ENCODE measurements at regions of chr5 and their contacts with region 1.

Region 1: DNA sequence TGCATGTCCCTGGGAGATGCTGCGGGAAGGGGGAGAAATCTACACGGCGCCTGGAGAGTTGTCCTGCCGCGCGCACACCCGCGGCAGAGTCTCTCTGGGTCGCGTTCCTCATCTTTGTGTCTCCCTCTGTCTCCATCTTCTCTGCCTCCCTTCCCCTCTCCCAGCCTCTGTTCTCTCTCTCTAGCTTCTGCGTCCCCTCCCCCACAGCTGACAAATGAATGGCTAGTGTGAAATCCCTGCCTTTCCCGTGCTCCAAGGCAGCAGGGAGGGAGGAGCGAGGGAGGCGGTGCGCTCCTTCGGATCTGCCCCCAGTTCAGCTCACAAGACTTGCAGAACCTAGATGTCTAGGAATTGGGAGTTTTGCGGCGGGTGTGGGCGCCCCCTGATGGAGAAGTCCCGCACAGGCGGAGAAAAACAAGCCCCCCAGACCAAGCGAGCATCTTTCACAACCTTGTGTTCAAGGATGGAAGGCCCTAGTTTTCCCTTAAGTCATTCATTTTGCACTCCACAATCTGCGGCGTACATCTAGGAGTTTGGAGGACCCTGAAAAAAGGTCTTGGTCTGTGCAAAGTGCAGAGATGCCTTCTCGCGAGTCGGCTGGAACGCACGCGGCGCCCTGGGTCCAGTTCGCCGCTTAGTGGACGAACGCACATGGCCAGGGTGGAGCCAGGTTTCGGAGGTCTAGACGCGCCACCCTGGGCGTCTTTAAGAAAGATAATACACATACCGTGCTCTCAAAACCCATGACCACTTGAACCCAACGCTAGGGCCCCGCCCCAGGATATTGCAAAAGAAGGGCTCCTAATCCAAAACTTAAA is 2.0 kb downstream of the VCAN start:
- DNase-seq: peak; percentile 78
- H3K4me3 Mint-ChIP-seq: peak overlapping the region; percentile 77
- H3K27ac Mint-ChIP-seq: no peak overlapping the region
- H3K4me1 Mint-ChIP-seq: peaks cover 34% of the 10 kb centered on the region
- H3K27me3 Mint-ChIP-seq: peaks cover 67% of the 10 kb centered on the region

Region 2: GRCh38 chr5:82312373-82312856 is 1161.1 kb before region 1 on chr5:
- CTCF ChIA-PET with region 1: interaction called, 3 read pairs
- POLR2A ChIA-PET with region 1: no interaction called
- intact Hi-C with region 1: loop called (anchors 1 kb)
- DNase-seq: peak; percentile 63
- H3K4me3 Mint-ChIP-seq: no peak overlapping the region
- H3K27ac Mint-ChIP-seq: no peak overlapping the region
- H3K4me1 Mint-ChIP-seq: no peaks in the 10 kb centered on the region
- H3K27me3 Mint-ChIP-seq: peaks cover 1% of the 10 kb centered on the region

Region 3: GRCh38 chr5:82641331-82642003 is 832.1 kb before region 1 on chr5:
- CTCF ChIA-PET with region 1: interaction called, 3 read pairs
- POLR2A ChIA-PET with region 1: no interaction called
- intact Hi-C with region 1: loop called (anchors 2 kb)
- DNase-seq: peak; percentile 12
- H3K4me3 Mint-ChIP-seq: no peak overlapping the region
- H3K27ac Mint-ChIP-seq: no peak overlapping the region
- H3K4me1 Mint-ChIP-seq: no peaks in the 10 kb centered on the region
- H3K27me3 Mint-ChIP-seq: no peaks in the 10 kb centered on the region

Region 4: DNA sequence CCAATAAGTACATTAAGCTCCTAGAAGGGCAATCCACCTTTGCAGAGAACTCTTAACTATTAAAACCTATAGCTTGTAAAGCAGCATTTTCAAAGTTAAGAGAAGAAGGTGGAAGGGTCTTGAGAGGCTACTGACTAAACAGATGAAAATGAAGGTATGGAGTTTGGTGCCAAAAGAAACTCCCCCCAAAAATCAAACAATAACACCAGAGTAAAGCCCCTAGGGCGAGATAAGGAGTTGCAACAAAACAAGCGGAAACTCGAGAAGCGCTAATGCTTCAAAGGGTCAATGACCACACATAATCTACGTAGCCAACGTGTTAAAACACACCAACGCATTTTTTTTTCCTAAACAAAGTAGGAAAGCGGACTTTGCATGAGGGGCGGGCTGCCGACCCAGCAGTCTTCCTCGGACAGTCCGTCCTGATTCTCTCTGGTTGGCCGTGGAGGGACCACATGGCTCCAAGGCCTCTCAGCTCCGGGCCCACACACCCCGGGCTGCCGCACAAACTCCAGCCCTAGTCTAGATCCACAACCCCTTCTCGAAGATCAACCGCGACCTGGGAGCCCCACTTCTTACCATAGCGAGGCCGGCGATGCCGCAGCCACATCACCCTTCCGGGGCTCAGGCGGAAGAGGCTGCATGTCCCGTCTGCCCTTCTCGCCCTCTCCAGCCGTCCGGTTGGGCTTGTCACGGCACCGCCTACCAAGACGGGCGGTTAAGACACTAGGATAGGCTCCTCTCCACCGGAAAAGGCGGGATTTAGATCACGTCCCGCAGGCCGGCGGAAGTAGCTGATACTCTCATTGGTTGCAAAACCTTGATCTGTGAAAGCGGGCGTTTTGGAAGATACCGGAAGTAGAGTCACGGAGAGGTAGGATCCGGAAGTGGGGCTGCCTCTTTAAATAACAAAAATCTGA is 396.6 kb before region 1 on chr5 and contains the starts of genes TMEM167A and XRCC4:
- CTCF ChIA-PET with region 1: no interaction called
- POLR2A ChIA-PET with region 1: no interaction called
- intact Hi-C with region 1: loop called (anchors 5 kb)
- DNase-seq: peak; percentile 96
- H3K4me3 Mint-ChIP-seq: peak within 1 kb of the TSS; percentile 99
- H3K27ac Mint-ChIP-seq: peak within 1 kb of the TSS; percentile 98
- H3K4me1 Mint-ChIP-seq: peaks cover 50% of the 10 kb centered on the region
- H3K27me3 Mint-ChIP-seq: no peaks in the 10 kb centered on the region
- total RNA-seq, gene TMEM167A: 73.6 to 78.6 TPM
- total RNA-seq, gene XRCC4: 14.0 to 15.2 TPM

Region 5: GRCh38 chr5:83364312-83365299 is 108.9 kb before region 1 on chr5:
- CTCF ChIA-PET with region 1: no interaction called
- POLR2A ChIA-PET with region 1: no interaction called
- intact Hi-C with region 1: no loop called
- DNase-seq: no peak
- H3K4me3 Mint-ChIP-seq: no peak overlapping the region
- H3K27ac Mint-ChIP-seq: no peak overlapping the region
- H3K4me1 Mint-ChIP-seq: no peaks in the 10 kb centered on the region
- H3K27me3 Mint-ChIP-seq: no peaks in the 10 kb centered on the region

Region 6: DNA sequence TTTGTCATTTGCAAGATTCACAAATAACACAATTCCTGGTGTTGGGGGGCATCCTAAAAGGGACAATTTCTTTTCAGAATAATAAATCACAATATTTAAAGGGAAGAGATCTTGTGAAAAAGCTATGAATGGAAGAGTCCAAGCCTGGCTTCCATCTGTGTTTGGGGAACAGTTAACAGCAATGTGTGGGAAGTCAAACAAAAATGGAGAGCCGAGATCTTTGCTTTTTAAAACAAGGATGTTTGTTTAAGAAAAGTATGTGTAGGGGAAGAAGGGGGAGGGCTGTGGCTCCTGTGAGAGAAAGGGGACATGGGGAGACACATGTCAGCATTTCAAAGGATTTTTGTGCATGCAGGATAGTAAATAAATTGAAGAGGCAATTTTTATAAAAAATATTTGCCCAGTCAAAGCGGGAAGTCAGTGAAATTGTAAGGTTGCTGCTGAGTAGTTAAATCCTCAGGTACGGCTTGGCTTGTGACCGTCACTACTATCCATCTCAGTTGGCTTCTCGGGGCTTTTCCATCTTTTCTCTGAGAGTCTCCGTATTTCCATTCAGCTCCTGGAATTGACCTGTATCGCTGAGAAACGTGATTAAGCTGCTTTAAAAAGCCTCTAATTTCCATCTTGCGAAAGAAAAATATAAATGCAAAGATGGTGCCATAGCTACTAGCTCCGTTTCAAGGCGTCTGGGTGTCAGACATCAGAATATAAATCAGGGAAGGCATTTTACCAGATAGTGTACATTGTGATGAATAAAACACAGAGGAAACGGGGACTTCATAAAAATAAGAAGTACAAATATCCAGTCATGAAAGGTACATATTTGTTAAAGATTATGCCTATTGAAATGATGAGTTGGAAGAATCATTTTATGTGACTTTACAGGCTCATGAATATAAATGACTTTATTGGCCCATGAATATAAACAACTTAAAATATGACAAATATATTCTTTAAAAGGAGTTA is 54.9 kb before region 1 on chr5:
- CTCF ChIA-PET with region 1: no interaction called
- POLR2A ChIA-PET with region 1: no interaction called
- intact Hi-C with region 1: no loop called
- DNase-seq: no peak
- H3K4me3 Mint-ChIP-seq: no peak overlapping the region
- H3K27ac Mint-ChIP-seq: no peak overlapping the region
- H3K4me1 Mint-ChIP-seq: no peaks in the 10 kb centered on the region
- H3K27me3 Mint-ChIP-seq: peaks cover 3% of the 10 kb centered on the region

Region 7: GRCh38 chr5:83436276-83436675 is 37.3 kb before region 1 on chr5:
- CTCF ChIA-PET with region 1: no interaction called
- POLR2A ChIA-PET with region 1: no interaction called
- intact Hi-C with region 1: no loop called
- DNase-seq: no peak
- H3K4me3 Mint-ChIP-seq: no peak overlapping the region
- H3K27ac Mint-ChIP-seq: no peak overlapping the region
- H3K4me1 Mint-ChIP-seq: no peaks in the 10 kb centered on the region
- H3K27me3 Mint-ChIP-seq: no peaks in the 10 kb centered on the region

Region 8: DNA sequence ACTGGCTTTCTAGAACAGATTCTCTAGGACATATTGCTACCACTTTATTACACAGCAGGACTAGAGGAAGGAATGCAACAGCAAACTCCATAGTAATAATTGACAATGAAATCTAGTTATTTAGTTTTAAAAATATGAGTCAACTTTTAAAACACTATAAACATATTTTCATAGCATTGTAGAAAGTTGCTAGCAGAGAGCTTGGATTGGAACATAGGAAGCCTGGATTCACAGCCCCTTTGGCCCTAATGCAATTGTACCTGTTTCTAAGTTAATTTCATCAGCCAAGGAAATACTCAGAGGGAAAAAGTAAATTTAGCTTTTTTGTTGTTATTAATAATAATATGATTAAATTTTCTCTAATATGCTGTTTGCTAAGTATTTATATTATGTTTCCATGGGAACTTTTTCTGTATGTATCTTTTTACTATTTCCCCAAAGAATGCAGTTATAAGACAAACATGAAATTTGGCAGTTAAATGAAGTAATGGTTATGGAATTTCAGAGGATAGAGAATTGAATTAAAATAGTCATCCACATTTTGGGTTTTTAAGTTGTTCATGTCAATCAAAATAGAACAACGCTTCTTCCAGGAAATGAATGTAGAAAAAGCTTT is 43.6 kb after region 1 on chr5:
- CTCF ChIA-PET with region 1: no interaction called
- POLR2A ChIA-PET with region 1: no interaction called
- intact Hi-C with region 1: no loop called
- DNase-seq: no peak
- H3K4me3 Mint-ChIP-seq: no peak overlapping the region
- H3K27ac Mint-ChIP-seq: no peak overlapping the region
- H3K4me1 Mint-ChIP-seq: no peaks in the 10 kb centered on the region
- H3K27me3 Mint-ChIP-seq: peaks cover 5% of the 10 kb centered on the region

Region 9: GRCh38 chr5:83564069-83564749 is 90.7 kb after region 1 on chr5:
- CTCF ChIA-PET with region 1: interaction called, 3 read pairs
- POLR2A ChIA-PET with region 1: no interaction called
- intact Hi-C with region 1: loop called (anchors 10 kb)
- DNase-seq: no peak
- H3K4me3 Mint-ChIP-seq: no peak overlapping the region
- H3K27ac Mint-ChIP-seq: no peak overlapping the region
- H3K4me1 Mint-ChIP-seq: no peaks in the 10 kb centered on the region
- H3K27me3 Mint-ChIP-seq: peaks cover 29% of the 10 kb centered on the region

Measured in activated CD4-positive, alpha-beta memory T cell treated with anti-CD3 and anti-CD28 coated beads for 36 hours (primary cell).